Cardiac septum (tissue), 1 donor: ENCODE measurements at regions of chr7 and their contacts with region 1.

Region 1: GRCh38 chr7:2608921-2609411 is 22.8 kb upstream of the TTYH3 start:
- DNase-seq: no peak

Region 2: DNA sequence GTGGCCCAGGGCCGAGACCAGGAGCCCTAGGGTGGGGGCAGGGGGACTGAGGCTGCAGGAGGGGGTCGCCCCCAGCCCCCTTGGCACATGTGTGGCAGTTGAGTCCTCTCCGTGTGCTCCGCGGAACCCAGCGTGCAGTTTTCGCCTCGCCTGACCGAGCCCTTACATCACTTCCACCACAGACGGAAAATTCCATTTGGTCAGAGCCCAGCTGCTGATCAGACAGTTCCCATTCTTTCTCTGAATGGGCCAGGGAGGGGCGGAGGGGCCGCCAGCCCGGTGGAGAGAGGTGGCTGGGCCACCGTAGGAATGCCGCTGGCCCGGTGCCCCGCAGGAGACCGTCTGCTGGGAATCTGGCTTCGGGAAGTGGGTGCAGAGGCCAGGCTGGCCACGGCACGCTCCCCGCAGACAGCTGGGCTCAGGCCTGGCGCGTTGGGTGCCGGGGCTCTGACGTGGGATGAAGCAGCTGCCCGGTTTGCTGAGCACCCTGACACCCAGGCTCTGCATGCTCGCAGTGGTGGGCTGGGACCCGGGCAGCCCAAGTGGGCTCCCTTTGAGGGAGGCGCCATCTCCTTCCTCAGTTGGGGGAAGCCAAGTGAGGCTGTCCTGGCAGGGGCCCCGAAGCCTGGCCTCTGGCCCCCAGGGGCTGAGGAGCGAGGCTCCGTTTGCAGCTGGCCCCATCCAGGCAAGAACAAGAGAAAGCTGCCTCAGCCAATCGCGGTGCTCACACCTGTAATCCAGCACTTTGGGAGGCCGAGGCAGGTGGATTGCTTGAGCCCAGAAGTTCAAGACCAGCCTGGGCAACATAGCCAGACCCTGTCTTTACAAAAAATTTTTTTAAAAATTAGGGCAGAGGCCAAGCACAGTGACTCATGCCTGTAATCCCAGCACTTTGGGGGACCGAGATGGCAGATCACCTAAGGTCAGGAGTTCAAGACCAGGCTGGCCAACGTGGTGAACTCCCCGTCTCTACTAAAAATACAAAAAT is 32.7 kb after region 1 on chr7:
- intact Hi-C with region 1: loop called (anchors 5 kb)
- DNase-seq: peak; percentile 92

Region 3: GRCh38 chr7:2771274-2771731 is 162.3 kb after region 1 on chr7:
- intact Hi-C with region 1: no loop called
- DNase-seq: no peak